Activated CD4-positive, alpha-beta T cell treated with anti-CD3 and anti-CD28 coated beads for 36 hours (primary cell): ENCODE measurements at regions of chr1 and their contacts with region 1.

Region 1: GRCh38 chr1:11187494-11187893 is 1.7 kb upstream of the ANGPTL7 start:
- DNase-seq: no peak
- ATAC-seq: no peak
- H3K4me3 Mint-ChIP-seq: no peak overlapping the region
- H3K27ac Mint-ChIP-seq: no peak overlapping the region
- H3K4me1 Mint-ChIP-seq: no peaks in the 10 kb centered on the region
- H3K27me3 Mint-ChIP-seq: no peaks in the 10 kb centered on the region

Region 2: GRCh38 chr1:10561955-10562354 is 625.5 kb before region 1 on chr1:
- CTCF ChIA-PET with region 1: no interaction called
- POLR2A ChIA-PET with region 1: no interaction called
- intact Hi-C with region 1: no loop called
- DNase-seq: peak; percentile 40
- ATAC-seq: peak; percentile 30
- H3K4me3 Mint-ChIP-seq: no peak overlapping the region
- H3K27ac Mint-ChIP-seq: no peak overlapping the region
- H3K4me1 Mint-ChIP-seq: peaks cover 8% of the 10 kb centered on the region
- H3K27me3 Mint-ChIP-seq: no peaks in the 10 kb centered on the region

Region 3: GRCh38 chr1:11176081-11176706 is 11.3 kb before region 1 on chr1:
- CTCF ChIA-PET with region 1: interaction called, 3 read pairs
- POLR2A ChIA-PET with region 1: interaction called, 11 read pairs
- intact Hi-C with region 1: no loop called
- DNase-seq: no peak
- ATAC-seq: no peak
- H3K4me3 Mint-ChIP-seq: no peak overlapping the region
- H3K27ac Mint-ChIP-seq: no peak overlapping the region
- H3K4me1 Mint-ChIP-seq: no peaks in the 10 kb centered on the region
- H3K27me3 Mint-ChIP-seq: no peaks in the 10 kb centered on the region

Region 4: GRCh38 chr1:11272832-11273594 is 85.5 kb after region 1 on chr1 and contains the start of gene UBIAD1:
- CTCF ChIA-PET with region 1: no interaction called
- POLR2A ChIA-PET with region 1: no interaction called
- intact Hi-C with region 1: no loop called
- DNase-seq: peak; percentile 95
- ATAC-seq: peak; percentile 84
- H3K4me3 Mint-ChIP-seq: peak within 1 kb of the TSS; percentile 95
- H3K27ac Mint-ChIP-seq: peak within 1 kb of the TSS; percentile 91
- H3K4me1 Mint-ChIP-seq: peaks cover 29% of the 10 kb centered on the region
- H3K27me3 Mint-ChIP-seq: no peaks in the 10 kb centered on the region
- total RNA-seq, gene UBIAD1: 29.2 to 32.0 TPM

Region 5: GRCh38 chr1:11918779-11919519 is 731.5 kb after region 1 on chr1:
- CTCF ChIA-PET with region 1: no interaction called
- POLR2A ChIA-PET with region 1: no interaction called
- intact Hi-C with region 1: no loop called
- DNase-seq: no peak
- ATAC-seq: no peak
- H3K4me3 Mint-ChIP-seq: no peak overlapping the region
- H3K27ac Mint-ChIP-seq: no peak overlapping the region
- H3K4me1 Mint-ChIP-seq: peaks cover 26% of the 10 kb centered on the region
- H3K27me3 Mint-ChIP-seq: no peaks in the 10 kb centered on the region